Transverse colon (tissue), 4 donors: ENCODE measurements at regions of chr13 and their contacts with region 1.

Region 1: DNA sequence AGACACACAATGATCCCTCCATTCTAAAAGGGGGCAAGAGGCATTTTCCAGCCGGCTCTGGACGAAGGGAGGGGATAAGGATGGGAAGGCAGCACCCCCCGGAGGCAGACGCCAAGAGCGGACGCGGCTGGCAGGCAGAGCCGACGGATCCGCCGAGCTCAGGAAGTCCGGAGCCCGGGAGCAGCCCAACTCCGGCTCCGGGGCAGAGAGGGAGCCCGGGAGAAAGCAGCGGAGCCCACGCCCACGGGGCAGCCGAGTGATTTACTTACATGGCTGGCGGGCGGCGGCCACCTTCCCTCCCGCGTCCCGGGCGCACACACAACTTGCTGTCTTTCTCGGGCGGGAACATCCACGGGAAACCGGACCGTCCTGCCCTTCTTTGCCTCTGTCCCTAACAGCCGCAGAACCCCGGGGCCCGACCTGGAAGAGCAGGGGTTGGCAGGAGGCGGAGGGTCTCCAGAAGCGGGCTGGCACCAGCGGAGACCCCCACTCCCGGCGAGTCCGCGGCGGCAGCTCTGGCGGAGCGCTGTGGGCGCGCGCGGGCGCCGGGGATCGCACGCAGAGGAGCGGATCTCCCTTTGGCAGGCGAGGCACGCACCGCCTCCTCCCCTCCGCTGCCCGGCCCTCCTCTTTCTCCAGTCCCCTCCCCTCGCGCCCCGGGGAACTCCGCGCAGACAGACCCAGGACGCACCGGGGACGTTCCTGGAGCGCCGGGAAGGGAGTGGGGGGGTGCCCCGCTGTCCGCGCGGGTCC is at the start of gene LHFPL6:
- DNase-seq: peak; percentile 75
- H3K4me3 ChIP-seq: peak within 1 kb of the TSS; percentile 47 to 77 (median 62)
- H3K27ac ChIP-seq: peak within 1 kb of the TSS; percentile 77 to 88 (median 84)
- H3K4me1 ChIP-seq: peaks cover 0 to 23% (median 5%) of the 10 kb centered on the region in 4 donors
- H3K27me3 ChIP-seq: peaks cover 41% of the 10 kb centered on the region
- CTCF ChIP-seq: peak in 1 of 5 experiments; percentile 10
- EP300 ChIP-seq: no peak
- POLR2A ChIP-seq: peak; percentile 41
- total RNA-seq, gene LHFPL6: 4.2 to 18.6 (median 9.3) TPM

Region 2: GRCh38 chr13:39037880-39038568 is 564.8 kb before region 1 on chr13 and contains the starts of genes NHLRC3 and PROSER1:
- in situ Hi-C with region 1: loop called in 1 of 4 experiments (anchors 25 kb)
- intact Hi-C with region 1: no loop called
- DNase-seq: peak; percentile 92
- H3K4me3 ChIP-seq: peak within 1 kb of the TSS; percentile 90 to 98 (median 96)
- H3K27ac ChIP-seq: peak within 1 kb of the TSS; percentile 90 to 96 (median 94)
- H3K4me1 ChIP-seq: peaks cover 3 to 62% (median 39%) of the 10 kb centered on the region in 4 donors
- H3K27me3 ChIP-seq: no peaks in the 10 kb centered on the region
- CTCF ChIP-seq: peak in 2 of 5 experiments; percentile 37 to 45
- EP300 ChIP-seq: no peak
- POLR2A ChIP-seq: peak; percentile 49
- total RNA-seq, gene NHLRC3: 3.2 to 58.1 (median 38.9) TPM
- total RNA-seq, gene PROSER1: 18.5 to 174 (median 71.1) TPM

Region 3: GRCh38 chr13:39263033-39263432 is 339.8 kb before region 1 on chr13:
- in situ Hi-C with region 1: loop called in 1 of 4 experiments (anchors 25 kb)
- intact Hi-C with region 1: no loop called
- DNase-seq: peak; percentile 9
- H3K4me3 ChIP-seq: no peak overlapping the region
- H3K27ac ChIP-seq: no peak overlapping the region
- H3K4me1 ChIP-seq: peaks cover 0 to 7% (median 0%) of the 10 kb centered on the region in 4 donors
- H3K27me3 ChIP-seq: no peaks in the 10 kb centered on the region
- CTCF ChIP-seq: peak; percentile 45 to 61 (median 51)
- EP300 ChIP-seq: no peak
- POLR2A ChIP-seq: no peak

Region 4: GRCh38 chr13:39655569-39656324 is 53.0 kb after region 1 on chr13 and contains the start of gene COG6:
- in situ Hi-C with region 1: no loop called
- intact Hi-C with region 1: no loop called
- DNase-seq: peak; percentile 94
- H3K4me3 ChIP-seq: peak within 1 kb of the TSS; percentile 59 to 91 (median 75)
- H3K27ac ChIP-seq: peak within 1 kb of the TSS; percentile 70 to 80 (median 77)
- H3K4me1 ChIP-seq: peaks cover 0 to 19% (median 8%) of the 10 kb centered on the region in 4 donors
- H3K27me3 ChIP-seq: no peaks in the 10 kb centered on the region
- CTCF ChIP-seq: no peak
- EP300 ChIP-seq: no peak
- POLR2A ChIP-seq: peak; percentile 51
- total RNA-seq, gene COG6: 17.6 to 109 (median 27.6) TPM

Region 5: DNA sequence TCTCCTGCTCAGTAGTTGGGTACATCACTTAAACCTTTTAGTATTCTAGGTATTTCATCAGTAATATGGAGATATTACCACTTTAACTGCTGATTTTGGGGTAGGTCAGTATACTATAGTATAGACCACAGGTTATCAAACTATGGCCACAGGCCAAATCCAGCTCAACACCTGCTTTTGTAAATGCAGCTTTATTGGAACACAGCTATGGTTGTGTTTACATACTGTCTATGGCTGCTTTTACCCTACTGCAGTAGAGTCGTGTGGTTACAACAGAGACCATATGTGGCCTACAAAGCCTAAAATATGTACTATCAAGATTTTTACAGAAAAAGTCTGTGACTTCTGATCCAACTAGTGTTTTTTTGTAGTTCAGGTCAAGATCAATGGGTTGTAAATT is 63.0 kb after region 1 on chr13:
- in situ Hi-C with region 1: no loop called
- intact Hi-C with region 1: no loop called
- DNase-seq: no peak
- H3K4me3 ChIP-seq: no peak overlapping the region
- H3K27ac ChIP-seq: no peak overlapping the region
- H3K4me1 ChIP-seq: peaks cover 0 to 5% (median 2%) of the 10 kb centered on the region in 4 donors
- H3K27me3 ChIP-seq: no peaks in the 10 kb centered on the region
- CTCF ChIP-seq: no peak
- EP300 ChIP-seq: no peak
- POLR2A ChIP-seq: no peak